Activated CD4-positive, alpha-beta memory T cell treated with anti-CD3 and anti-CD28 coated beads for 36 hours (primary cell): ENCODE measurements at regions of chr2 and their contacts with region 1.

Region 1: DNA sequence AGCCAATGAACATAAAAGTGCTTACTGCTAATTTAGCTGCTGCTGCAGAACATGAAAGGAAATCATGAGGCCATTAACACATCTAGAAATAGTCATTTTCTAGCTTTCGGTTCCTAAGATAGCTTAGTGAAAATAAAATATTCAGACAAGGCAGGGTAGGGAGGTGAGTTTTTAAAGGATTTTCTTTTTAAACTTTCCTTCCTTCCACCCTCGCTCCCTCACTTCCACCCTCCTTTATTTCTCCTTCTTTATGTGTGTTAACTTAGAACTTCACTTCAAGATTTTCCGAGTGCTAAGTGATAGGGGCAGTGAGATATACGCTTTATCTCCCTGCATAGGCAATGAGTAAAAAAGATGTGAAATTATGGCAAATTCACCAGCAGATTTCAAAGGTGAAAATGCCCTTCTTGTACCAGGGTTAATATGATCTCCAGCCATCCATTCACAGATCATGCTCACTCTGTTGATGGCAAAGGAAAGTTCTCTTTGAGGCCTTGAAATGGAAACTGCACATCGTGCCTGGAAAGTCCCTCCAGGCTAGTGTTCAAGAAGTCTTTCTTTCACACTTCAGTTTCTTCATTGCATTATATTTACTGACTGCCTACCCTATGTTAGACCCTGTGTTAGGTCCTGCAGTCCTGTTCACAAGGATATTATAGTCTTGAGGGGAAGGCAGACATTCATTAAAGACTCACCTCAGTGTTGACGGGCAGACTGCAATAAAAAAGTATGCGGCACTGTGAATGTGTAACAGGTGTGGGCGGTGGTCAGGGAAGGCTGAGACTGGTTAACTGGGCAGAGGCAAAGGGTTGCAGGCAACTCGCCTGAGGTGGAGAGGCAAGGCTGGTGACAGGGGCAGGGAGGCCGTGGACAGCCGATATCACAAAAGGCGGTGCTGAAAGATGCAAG is 200.8 kb downstream of the PLCL1 start:
- DNase-seq: peak; percentile 62
- H3K4me3 Mint-ChIP-seq: peak overlapping the region; percentile 61
- H3K27ac Mint-ChIP-seq: peak overlapping the region; percentile 84
- H3K4me1 Mint-ChIP-seq: peaks cover 56% of the 10 kb centered on the region
- H3K27me3 Mint-ChIP-seq: no peaks in the 10 kb centered on the region

Region 2: GRCh38 chr2:197931661-197932312 is 73.4 kb before region 1 on chr2:
- CTCF ChIA-PET with region 1: no interaction called
- POLR2A ChIA-PET with region 1: no interaction called
- intact Hi-C with region 1: loop called (anchors 5 kb)
- DNase-seq: no peak
- H3K4me3 Mint-ChIP-seq: no peak overlapping the region
- H3K27ac Mint-ChIP-seq: no peak overlapping the region
- H3K4me1 Mint-ChIP-seq: peaks cover 46% of the 10 kb centered on the region
- H3K27me3 Mint-ChIP-seq: no peaks in the 10 kb centered on the region

Region 3: DNA sequence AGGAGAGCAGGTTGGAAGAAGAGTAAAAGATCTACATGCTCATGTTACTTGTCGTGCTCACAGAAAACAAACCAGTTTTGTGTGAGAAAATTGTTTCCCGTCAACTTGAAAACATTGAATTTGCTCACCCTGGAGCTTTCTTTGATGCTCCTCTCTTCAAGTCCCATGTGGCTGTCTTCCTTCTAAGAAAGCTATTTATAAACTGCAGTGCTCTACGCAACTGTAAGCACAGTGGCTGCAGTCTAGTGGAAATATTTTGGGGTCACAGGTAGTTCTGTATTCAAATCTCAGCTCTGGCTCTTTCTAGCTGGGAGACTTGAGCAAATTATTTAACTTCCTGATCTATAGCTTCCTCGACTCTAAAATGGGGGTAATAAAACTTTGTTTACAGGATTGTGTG is 11.1 kb after region 1 on chr2:
- CTCF ChIA-PET with region 1: interaction called, 4 read pairs
- POLR2A ChIA-PET with region 1: no interaction called
- intact Hi-C with region 1: loop called (anchors 2 kb)
- DNase-seq: no peak
- H3K4me3 Mint-ChIP-seq: no peak overlapping the region
- H3K27ac Mint-ChIP-seq: no peak overlapping the region
- H3K4me1 Mint-ChIP-seq: peaks cover 16% of the 10 kb centered on the region
- H3K27me3 Mint-ChIP-seq: no peaks in the 10 kb centered on the region

Region 4: GRCh38 chr2:198042189-198042588 is 37.0 kb after region 1 on chr2:
- CTCF ChIA-PET with region 1: no interaction called
- POLR2A ChIA-PET with region 1: no interaction called
- intact Hi-C with region 1: loop called (anchors 1 kb)
- DNase-seq: no peak
- H3K4me3 Mint-ChIP-seq: no peak overlapping the region
- H3K27ac Mint-ChIP-seq: no peak overlapping the region
- H3K4me1 Mint-ChIP-seq: peaks cover 24% of the 10 kb centered on the region
- H3K27me3 Mint-ChIP-seq: no peaks in the 10 kb centered on the region